Calu3 (cell line): ENCODE measurements at regions of chr6 and their contacts with region 1.

Region 1: GRCh38 chr6:134174672-134175198 is 122.3 kb upstream of the SLC2A12 start:
- DNase-seq: peak; percentile 92
- H3K4me3 Mint-ChIP-seq: peak overlapping the region; percentile 88
- H3K27ac Mint-ChIP-seq: peak overlapping the region; percentile 84
- H3K4me1 Mint-ChIP-seq: peaks cover 44% of the 10 kb centered on the region
- H3K27me3 Mint-ChIP-seq: no peaks in the 10 kb centered on the region
- CTCF ChIP-seq: no peak

Region 2: GRCh38 chr6:134235937-134236751 is 61.4 kb after region 1 on chr6:
- CTCF ChIA-PET with region 1: no interaction called
- intact Hi-C with region 1: loop called (anchors 5 kb)
- DNase-seq: peak; percentile 49
- H3K4me3 Mint-ChIP-seq: no peak overlapping the region
- H3K27ac Mint-ChIP-seq: peak overlapping the region; percentile 87
- H3K4me1 Mint-ChIP-seq: peaks cover 26% of the 10 kb centered on the region
- H3K27me3 Mint-ChIP-seq: no peaks in the 10 kb centered on the region
- CTCF ChIP-seq: no peak

Region 3: GRCh38 chr6:134453870-134454510 is 279.3 kb after region 1 on chr6:
- CTCF ChIA-PET with region 1: no interaction called
- intact Hi-C with region 1: loop called (anchors 10 kb)
- DNase-seq: peak; percentile 49
- H3K4me3 Mint-ChIP-seq: peak overlapping the region; percentile 42
- H3K27ac Mint-ChIP-seq: peak overlapping the region; percentile 19
- H3K4me1 Mint-ChIP-seq: peaks cover 26% of the 10 kb centered on the region
- H3K27me3 Mint-ChIP-seq: no peaks in the 10 kb centered on the region
- CTCF ChIP-seq: no peak

Region 4: GRCh38 chr6:134626086-134626485 is 451.4 kb after region 1 on chr6:
- CTCF ChIA-PET with region 1: no interaction called
- intact Hi-C with region 1: loop called (anchors 5 kb)
- DNase-seq: no peak
- H3K4me3 Mint-ChIP-seq: no peak overlapping the region
- H3K27ac Mint-ChIP-seq: no peak overlapping the region
- H3K4me1 Mint-ChIP-seq: peaks cover 9% of the 10 kb centered on the region
- H3K27me3 Mint-ChIP-seq: no peaks in the 10 kb centered on the region
- CTCF ChIP-seq: no peak

Region 5: DNA sequence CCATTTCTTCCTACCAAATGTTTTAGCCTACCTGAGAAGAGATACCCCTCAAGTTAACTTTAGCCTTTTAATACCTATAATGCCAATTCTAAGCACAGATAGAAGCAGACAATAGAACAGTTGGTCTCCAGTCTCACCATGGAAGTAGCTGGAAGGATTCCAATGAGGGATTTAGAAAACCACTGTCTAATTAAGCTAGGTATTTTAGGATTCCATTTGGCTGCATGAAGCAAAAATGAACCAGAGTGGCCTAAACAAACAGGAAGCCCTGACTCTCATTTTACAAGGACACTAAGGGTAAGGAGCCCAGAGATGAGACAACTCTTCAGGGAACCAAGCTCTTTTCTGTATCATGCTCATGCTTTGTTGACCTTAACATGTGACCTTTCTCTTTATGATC is 575.9 kb after region 1 on chr6:
- CTCF ChIA-PET with region 1: no interaction called
- intact Hi-C with region 1: loop called (anchors 10 kb)
- DNase-seq: no peak
- H3K4me3 Mint-ChIP-seq: no peak overlapping the region
- H3K27ac Mint-ChIP-seq: peak overlapping the region; percentile 54
- H3K4me1 Mint-ChIP-seq: peaks cover 30% of the 10 kb centered on the region
- H3K27me3 Mint-ChIP-seq: no peaks in the 10 kb centered on the region
- CTCF ChIP-seq: no peak

Region 6: GRCh38 chr6:134882426-134883038 is 707.8 kb after region 1 on chr6:
- CTCF ChIA-PET with region 1: no interaction called
- intact Hi-C with region 1: loop called (anchors 5 kb)
- DNase-seq: peak; percentile 55
- H3K4me3 Mint-ChIP-seq: no peak overlapping the region
- H3K27ac Mint-ChIP-seq: no peak overlapping the region
- H3K4me1 Mint-ChIP-seq: no peaks in the 10 kb centered on the region
- H3K27me3 Mint-ChIP-seq: no peaks in the 10 kb centered on the region
- CTCF ChIP-seq: peak; percentile 64